Activated CD4-positive, alpha-beta T cell treated with anti-CD3 and anti-CD28 coated beads, Interleukin-2, amount 10 ng/mL, durations not matched to agents 24 days and 14 days (primary cell): ENCODE measurements at regions of chr10 and their contacts with region 1.

Region 1: GRCh38 chr10:62050893-62051433 is 149.5 kb downstream of the ARID5B start:
- DNase-seq: peak; percentile 93
- H3K4me3 Mint-ChIP-seq: peak overlapping the region; percentile 97
- H3K27ac Mint-ChIP-seq: peak overlapping the region; percentile 99
- H3K4me1 Mint-ChIP-seq: peaks cover 79% of the 10 kb centered on the region
- H3K27me3 Mint-ChIP-seq: no peaks in the 10 kb centered on the region

Region 2: GRCh38 chr10:61744469-61744868 is 306.5 kb before region 1 on chr10:
- intact Hi-C with region 1: no loop called
- DNase-seq: no peak
- H3K4me3 Mint-ChIP-seq: no peak overlapping the region
- H3K27ac Mint-ChIP-seq: no peak overlapping the region
- H3K4me1 Mint-ChIP-seq: no peaks in the 10 kb centered on the region
- H3K27me3 Mint-ChIP-seq: peaks cover 16% of the 10 kb centered on the region

Region 3: DNA sequence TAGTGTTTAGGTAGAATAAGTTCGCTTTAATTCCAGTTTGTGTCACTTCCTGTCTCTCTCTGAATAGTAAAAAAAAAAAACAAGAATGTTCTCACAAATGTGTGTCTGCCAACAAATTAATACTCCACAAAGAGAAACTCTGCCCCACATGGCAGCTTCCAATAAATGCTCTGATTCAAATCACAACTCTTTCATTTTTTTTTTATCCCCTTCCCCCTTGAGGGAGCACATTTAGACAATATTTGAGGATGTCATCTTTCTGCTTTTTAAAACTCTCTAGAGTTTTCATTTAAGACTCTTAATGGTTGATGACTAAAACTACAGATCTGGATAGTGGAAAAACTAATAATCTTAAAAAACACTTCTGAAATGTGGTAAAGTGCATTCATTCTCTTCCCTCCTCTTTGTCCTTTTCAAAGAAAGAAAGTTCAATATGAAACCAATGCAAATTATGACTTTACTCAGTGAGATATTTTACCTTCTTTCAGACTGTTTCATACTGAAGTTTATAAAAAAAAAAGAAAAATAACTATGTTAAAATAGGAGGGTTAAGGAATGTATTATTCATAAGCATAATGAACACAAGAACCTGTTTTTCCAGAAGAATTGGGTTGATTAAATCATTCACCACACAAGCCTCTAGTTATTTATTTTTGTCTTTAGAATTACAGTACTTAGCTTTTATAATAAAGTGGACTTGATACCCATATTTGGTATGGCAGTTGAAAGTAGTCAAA is 107.1 kb before region 1 on chr10:
- intact Hi-C with region 1: loop called (anchors 1 kb)
- DNase-seq: peak; percentile 73
- H3K4me3 Mint-ChIP-seq: peak overlapping the region; percentile 82
- H3K27ac Mint-ChIP-seq: peak overlapping the region; percentile 93
- H3K4me1 Mint-ChIP-seq: peaks cover 49% of the 10 kb centered on the region
- H3K27me3 Mint-ChIP-seq: no peaks in the 10 kb centered on the region

Region 4: DNA sequence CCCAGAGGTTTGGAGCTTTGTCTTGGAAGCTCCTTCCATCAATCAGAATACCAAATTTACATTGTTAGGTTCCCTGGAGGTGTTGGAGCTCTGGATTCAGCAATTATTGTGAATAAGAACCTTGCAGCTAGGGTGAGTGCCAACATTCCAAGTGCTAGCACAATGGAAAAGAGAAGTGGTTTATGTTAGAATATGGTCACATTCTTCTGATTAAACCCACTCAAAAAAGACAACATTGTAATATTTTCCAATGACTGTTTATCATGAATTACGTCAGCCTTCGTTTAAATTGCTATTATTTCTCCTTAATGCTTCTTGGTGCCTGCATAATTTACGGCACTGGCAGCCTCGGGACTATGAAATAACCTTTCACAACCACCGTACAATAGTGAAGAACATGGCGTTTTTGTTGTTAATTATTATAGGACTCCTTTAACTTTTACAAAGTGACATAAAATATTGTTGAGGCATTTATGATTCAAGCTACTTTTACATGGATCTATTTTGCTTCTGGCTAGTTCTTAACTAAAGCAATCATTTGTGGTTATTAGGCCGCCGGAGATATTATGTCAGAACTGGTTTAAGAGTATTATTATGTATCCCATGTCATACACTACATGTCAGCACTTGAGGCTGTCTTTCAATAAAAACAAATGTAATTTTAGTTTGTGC is 31.8 kb before region 1 on chr10:
- intact Hi-C with region 1: loop called (anchors 1 kb)
- DNase-seq: no peak
- H3K4me3 Mint-ChIP-seq: peak overlapping the region; percentile 41
- H3K27ac Mint-ChIP-seq: peak overlapping the region; percentile 93
- H3K4me1 Mint-ChIP-seq: peaks cover 53% of the 10 kb centered on the region
- H3K27me3 Mint-ChIP-seq: no peaks in the 10 kb centered on the region

Region 5: GRCh38 chr10:62071846-62072281 is 20.9 kb after region 1 on chr10:
- intact Hi-C with region 1: no loop called
- DNase-seq: no peak
- H3K4me3 Mint-ChIP-seq: peak overlapping the region; percentile 55
- H3K27ac Mint-ChIP-seq: peak overlapping the region; percentile 91
- H3K4me1 Mint-ChIP-seq: peaks cover 57% of the 10 kb centered on the region
- H3K27me3 Mint-ChIP-seq: no peaks in the 10 kb centered on the region

Region 6: DNA sequence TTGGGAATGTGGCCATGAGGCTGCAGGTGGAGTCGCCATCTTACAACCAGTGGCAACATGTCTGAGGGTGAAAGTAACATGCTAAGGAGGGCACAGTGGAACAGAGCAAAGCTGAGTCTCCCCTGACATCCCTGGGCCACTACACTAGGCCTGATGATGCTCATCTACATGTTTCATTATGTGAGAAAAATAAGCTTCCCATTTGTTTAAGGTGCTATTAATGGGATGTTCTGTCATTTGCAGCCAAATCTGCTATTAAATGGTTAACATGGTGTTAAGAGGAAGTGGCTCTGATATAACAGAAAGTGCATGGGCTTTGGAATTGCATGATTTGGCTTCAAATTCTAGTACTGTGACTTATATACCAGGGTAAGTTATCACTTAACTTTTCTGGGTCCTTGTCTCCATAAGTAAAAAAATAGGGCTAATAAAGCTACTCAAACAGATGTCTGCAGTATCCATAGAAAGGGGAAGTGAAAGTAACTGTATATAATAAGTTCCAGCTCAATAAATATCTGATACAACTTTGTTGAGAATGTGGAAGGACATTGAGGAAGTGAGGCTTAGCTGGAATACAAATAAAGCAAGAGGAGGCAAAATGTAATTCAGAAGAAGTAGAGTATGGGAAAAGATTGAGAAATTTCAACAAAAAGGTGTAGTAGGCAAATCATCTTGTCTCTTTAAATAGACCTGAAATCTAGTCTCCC is 58.8 kb after region 1 on chr10:
- intact Hi-C with region 1: no loop called
- DNase-seq: no peak
- H3K4me3 Mint-ChIP-seq: peak overlapping the region; percentile 6
- H3K27ac Mint-ChIP-seq: peak overlapping the region; percentile 3
- H3K4me1 Mint-ChIP-seq: peaks cover 35% of the 10 kb centered on the region
- H3K27me3 Mint-ChIP-seq: no peaks in the 10 kb centered on the region

Region 7: DNA sequence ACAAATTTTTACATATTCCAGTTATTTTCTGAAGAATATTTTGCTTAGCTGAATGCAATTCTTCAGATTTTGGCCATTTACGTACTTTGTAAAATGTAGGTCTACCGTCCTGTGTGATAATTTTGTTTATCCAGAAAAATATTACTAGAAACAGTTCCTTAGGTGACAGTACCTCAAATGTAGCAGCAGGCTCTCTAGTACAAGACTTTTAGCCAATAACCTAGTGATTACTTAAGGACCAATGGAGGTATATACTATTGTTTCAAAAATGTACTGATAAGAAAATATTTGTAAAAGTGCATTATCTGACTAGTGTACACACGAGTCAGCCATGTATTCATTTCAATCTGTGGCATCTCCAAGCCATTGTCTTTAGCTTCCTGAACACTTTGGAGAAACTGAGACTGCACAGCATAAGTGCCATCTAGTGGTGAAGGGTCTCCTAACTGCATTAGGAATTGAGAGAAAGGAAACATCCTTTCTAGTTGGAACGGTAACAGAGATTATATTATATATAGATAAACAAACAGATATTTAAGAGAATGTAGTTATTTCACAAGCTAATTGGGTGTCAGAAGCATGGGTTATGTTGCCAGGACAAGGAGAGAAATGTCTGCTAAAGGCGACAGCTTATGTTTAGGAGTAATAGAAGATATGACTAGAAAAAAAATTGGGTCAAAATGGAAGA is 194.0 kb after region 1 on chr10:
- intact Hi-C with region 1: loop called (anchors 2 kb)
- DNase-seq: peak; percentile 90
- H3K4me3 Mint-ChIP-seq: peak overlapping the region; percentile 69
- H3K27ac Mint-ChIP-seq: peak overlapping the region; percentile 82
- H3K4me1 Mint-ChIP-seq: peaks cover 36% of the 10 kb centered on the region
- H3K27me3 Mint-ChIP-seq: no peaks in the 10 kb centered on the region

Region 8: GRCh38 chr10:62732841-62733653 is 682.1 kb after region 1 on chr10:
- intact Hi-C with region 1: loop called (anchors 10 kb)
- DNase-seq: peak; percentile 91
- H3K4me3 Mint-ChIP-seq: no peak overlapping the region
- H3K27ac Mint-ChIP-seq: no peak overlapping the region
- H3K4me1 Mint-ChIP-seq: peaks cover 43% of the 10 kb centered on the region
- H3K27me3 Mint-ChIP-seq: peaks cover 1% of the 10 kb centered on the region

Region 9: DNA sequence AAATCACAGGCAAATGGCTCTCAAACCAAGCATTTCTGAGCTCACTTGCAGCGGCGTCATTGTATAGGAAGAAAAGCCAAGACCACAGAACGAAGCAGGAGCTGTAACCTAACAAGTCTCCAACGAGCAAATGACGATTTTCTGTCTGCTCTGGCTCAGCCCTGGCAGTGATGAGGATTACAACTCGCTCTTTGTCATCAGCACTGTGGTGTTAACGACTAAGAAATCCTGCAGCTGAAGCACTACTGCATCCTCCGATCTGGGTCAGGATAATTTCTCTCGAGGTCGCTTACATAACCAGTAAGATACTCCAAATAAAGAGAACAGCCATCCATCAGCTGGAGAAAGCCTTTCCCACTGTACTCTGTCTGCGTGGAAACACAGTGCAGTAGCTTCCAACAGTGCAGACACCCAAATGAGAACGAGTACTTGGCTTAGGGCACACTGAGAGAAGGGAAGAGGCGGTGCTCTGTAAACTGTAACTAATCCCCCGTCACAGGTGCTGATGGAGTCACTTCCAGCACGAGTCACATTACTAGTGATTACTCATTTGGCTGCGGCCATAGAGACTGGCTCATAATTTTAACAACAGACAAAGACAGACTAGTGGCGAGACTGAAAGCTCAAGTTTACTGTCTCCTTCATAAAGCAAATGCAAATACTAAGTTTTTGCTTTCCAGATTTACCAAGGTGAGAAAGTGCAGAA is 1218.0 kb after region 1 on chr10:
- intact Hi-C with region 1: loop called (anchors 10 kb)
- DNase-seq: peak; percentile 95
- H3K4me3 Mint-ChIP-seq: peak overlapping the region; percentile 93
- H3K27ac Mint-ChIP-seq: peak overlapping the region; percentile 99
- H3K4me1 Mint-ChIP-seq: peaks cover 21% of the 10 kb centered on the region
- H3K27me3 Mint-ChIP-seq: no peaks in the 10 kb centered on the region